ENCODE measurements at regions of chr2 and their contacts with region 1.

Region 1: GRCh38 chr2:232327105-232328041 is 51.2 kb upstream of the ALPP start:
- DNase-seq: peak in 1 of 2 donors; percentile 38
- ATAC-seq: no peak
- H3K4me3 ChIP-seq: no peak overlapping the region
- H3K27ac ChIP-seq: no peak overlapping the region
- H3K4me1 ChIP-seq: no peaks in the 10 kb centered on the region
- H3K27me3 ChIP-seq: no peaks in the 10 kb centered on the region
- CTCF ChIP-seq: peak; percentile 60 to 86 (median 78)
- POLR2A ChIP-seq: no peak

Region 2: DNA sequence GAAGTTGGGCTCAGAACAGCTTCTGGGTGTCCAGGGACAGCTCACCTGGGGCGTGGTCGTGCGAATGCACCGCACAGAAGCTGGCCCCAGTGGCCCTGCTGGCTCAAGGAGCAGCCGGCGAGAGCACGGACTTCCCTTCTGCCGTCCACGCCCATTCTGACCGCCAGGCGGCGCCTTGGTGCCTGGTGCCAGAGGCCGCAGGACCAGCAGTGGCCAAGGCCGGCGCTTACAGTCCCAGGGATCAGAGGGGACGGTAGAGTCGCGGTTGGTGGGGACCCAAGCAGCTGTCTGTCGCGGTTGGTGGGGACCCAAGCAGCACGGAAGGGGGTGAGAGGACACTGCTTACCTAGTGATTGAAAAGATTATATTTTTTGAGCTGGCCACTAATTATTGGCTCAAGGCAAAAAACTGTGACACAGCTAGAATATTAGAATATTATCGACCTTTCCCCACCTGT is 426.9 kb before region 1 on chr2:
- in situ Hi-C with region 1: loop called in 2 of 4 experiments (anchors 10 to 25 kb)
- intact Hi-C with region 1: no loop called
- DNase-seq: peak; percentile 10 to 53
- ATAC-seq: peak in 1 of 2 donors; percentile 75
- H3K4me3 ChIP-seq: no peak overlapping the region
- H3K27ac ChIP-seq: no peak overlapping the region
- H3K4me1 ChIP-seq: no peaks in the 10 kb centered on the region
- H3K27me3 ChIP-seq: no peaks in the 10 kb centered on the region
- CTCF ChIP-seq: peak; percentile 32 to 67 (median 58)
- POLR2A ChIP-seq: no peak

Region 3: GRCh38 chr2:231907787-231908186 is 419.6 kb before region 1 on chr2:
- in situ Hi-C with region 1: loop called in 2 of 4 experiments (anchors 10 to 25 kb)
- intact Hi-C with region 1: loop called (anchors 2 kb)
- DNase-seq: no peak
- ATAC-seq: no peak
- H3K4me3 ChIP-seq: no peak overlapping the region
- H3K27ac ChIP-seq: no peak overlapping the region
- H3K4me1 ChIP-seq: no peaks in the 10 kb centered on the region
- H3K27me3 ChIP-seq: no peaks in the 10 kb centered on the region
- CTCF ChIP-seq: no peak
- POLR2A ChIP-seq: no peak

Region 4: GRCh38 chr2:231925303-231926179 is 401.8 kb before region 1 on chr2:
- in situ Hi-C with region 1: loop called in 2 of 4 experiments (anchors 10 to 25 kb)
- intact Hi-C with region 1: loop called (anchors 1 kb)
- DNase-seq: peak; percentile 56 to 66
- ATAC-seq: peak; percentile 93 to 95
- H3K4me3 ChIP-seq: peak overlapping the region; percentile 48 to 66 (median 50)
- H3K27ac ChIP-seq: no peak overlapping the region
- H3K4me1 ChIP-seq: peaks cover 8 to 21% of the 10 kb centered on the region in 2 donors
- H3K27me3 ChIP-seq: peaks cover 29 to 65% (median 57%) of the 10 kb centered on the region in 3 donors
- CTCF ChIP-seq: peak; percentile 76 to 95 (median 92)
- POLR2A ChIP-seq: no peak

Region 5: GRCh38 chr2:232292395-232293154 is 34.8 kb before region 1 on chr2:
- in situ Hi-C with region 1: no loop called
- intact Hi-C with region 1: loop called (anchors 5 kb)
- DNase-seq: peak in 1 of 2 donors; percentile 21
- ATAC-seq: peak in 1 of 2 donors; percentile 41
- H3K4me3 ChIP-seq: no peak overlapping the region
- H3K27ac ChIP-seq: no peak overlapping the region
- H3K4me1 ChIP-seq: no peaks in the 10 kb centered on the region
- H3K27me3 ChIP-seq: no peaks in the 10 kb centered on the region
- CTCF ChIP-seq: peak in 1 of 5 experiments; percentile 37
- POLR2A ChIP-seq: no peak

Region 6: DNA sequence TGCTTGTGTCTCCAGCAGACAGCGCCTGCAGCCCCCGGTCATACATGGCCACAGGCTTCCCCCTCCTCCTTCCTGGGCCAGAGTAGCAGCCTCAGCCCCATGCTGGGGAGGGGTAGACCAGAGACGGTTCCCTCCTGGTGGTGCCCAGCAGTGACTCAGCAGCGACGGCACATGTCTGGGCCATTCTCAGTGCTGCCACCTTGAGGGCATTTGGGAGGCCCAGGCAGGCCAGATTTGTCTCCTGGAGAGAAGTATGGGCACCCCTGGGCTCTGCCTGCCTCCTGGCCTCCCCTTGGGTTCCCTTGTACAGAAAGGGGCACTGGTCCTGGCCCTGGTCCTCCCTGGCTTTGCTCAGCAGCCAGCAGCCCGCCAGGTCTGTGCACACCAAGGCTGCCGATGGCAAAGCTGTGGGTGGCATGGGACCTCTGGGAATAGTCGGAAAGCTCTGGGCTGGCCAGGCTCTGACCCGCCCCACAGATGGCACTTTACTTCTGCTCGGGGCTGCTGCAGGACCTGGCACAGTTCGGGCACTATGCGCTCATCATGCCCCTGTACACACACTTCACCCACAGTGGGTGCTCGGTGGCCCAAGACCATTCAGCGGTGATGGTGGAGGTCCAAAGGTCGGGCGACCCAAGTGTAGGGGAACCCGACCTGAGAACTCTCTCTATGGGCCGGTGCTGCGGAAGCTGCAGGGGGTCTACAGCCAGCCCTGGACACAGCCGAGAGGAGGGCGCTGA is 117.2 kb after region 1 on chr2:
- in situ Hi-C with region 1: no loop called
- intact Hi-C with region 1: loop called (anchors 10 kb)
- DNase-seq: peak in 1 of 2 donors; percentile 48
- ATAC-seq: peak in 1 of 2 donors; percentile 23
- H3K4me3 ChIP-seq: no peak overlapping the region
- H3K27ac ChIP-seq: peak overlapping the region; percentile 10 to 66 (median 36)
- H3K4me1 ChIP-seq: peaks cover 3 to 9% of the 10 kb centered on the region in 2 donors
- H3K27me3 ChIP-seq: no peaks in the 10 kb centered on the region
- CTCF ChIP-seq: peak in 4 of 5 experiments; percentile 19 to 56 (median 34)
- POLR2A ChIP-seq: no peak

Measured in gastrocnemius medialis (tissue), 4 donors.